Dorsolateral prefrontal cortex (tissue), 120 donors: ENCODE measurements at regions of chr13 and their contacts with region 1.

Region 1: DNA sequence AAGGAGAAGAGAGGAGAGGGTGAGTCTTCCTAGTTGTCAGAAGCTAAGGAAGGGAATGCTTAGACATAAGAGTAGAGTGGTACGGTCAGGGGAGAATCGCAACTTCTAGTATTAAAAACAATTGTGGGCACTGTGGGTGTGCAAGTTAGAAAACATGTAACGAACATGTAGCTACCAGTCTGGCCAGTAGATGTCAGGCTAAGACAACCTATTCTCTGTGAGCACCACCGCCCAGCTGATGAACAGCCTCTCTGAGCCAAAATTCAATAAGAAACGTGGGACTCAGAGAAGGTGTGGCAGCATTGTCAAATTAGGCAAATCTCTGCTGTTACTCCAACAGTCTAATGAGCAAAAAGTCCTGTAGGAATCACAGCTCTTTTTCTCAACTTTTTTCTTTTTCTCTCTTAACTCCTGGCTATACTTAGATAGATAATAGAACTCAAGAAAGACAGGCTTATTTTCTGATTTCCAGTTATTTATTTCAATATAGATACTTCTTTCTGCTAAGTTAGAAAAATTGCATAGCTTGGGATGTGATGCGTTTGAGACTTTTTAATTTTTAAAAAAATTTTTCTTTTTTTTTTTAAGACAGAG is 186.2 kb downstream of the USP12 start:
- DNase-seq: peak in 6 of 10 donors; percentile 52 to 85 (median 72)
- H3K4me3 ChIP-seq: peak overlapping the region in 1 of 59 donors; percentile 12
- H3K27ac ChIP-seq: peak overlapping the region in 2 of 59 donors; percentile 0 to 52
- H3K27me3 ChIP-seq: no peaks in the 10 kb centered on the region
- CTCF ChIP-seq: peak in 55 of 56 donors; percentile 50 to 99 (median 90)

Region 2: GRCh38 chr13:26946684-26947343 is 38.6 kb before region 1 on chr13:
- intact Hi-C with region 1: loop called in 1 of 2 experiments (anchors 5 kb)
- DNase-seq: no peak
- H3K4me3 ChIP-seq: no peak overlapping the region
- H3K27ac ChIP-seq: no peak overlapping the region
- H3K27me3 ChIP-seq: no peaks in the 10 kb centered on the region
- CTCF ChIP-seq: peak in 55 of 56 donors; percentile 36 to 81 (median 63)

Region 3: DNA sequence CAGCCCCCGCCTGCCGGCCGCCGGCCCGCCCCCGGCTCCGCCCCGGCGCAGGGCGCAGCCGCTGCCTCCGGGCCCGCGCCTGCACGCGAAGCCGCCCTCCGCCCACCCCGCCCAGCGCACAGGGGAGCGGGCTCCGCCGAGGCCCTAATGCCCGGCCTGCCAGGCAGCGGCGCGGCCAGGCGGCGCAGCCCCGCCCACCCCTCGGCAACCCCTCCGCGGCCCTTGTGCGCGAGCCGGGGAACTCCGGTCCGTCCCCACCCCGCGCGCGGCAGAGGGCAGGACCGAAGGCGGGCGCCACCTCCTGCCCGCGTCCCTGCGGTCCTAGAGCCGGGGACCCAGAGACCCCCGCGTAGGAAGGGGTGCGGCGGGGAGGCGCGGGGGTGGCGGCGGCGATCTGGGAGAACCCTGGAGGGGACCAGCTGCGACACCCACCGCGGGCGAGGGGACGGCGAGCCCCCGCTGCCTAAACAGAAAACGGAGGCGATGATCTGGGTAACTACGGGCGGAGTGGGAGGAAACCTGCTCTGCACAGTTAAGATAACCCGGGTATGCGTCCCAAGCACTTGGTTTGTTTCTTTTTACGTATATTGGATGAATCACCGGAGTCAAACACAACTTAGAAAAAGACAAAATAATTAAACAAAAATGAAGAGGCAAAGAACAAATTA is 186.6 kb after region 1 on chr13:
- intact Hi-C with region 1: loop called (anchors 5 kb)
- DNase-seq: peak; percentile 74 to 93 (median 84)
- H3K4me3 ChIP-seq: peak overlapping the region; percentile 62 to 97 (median 84)
- H3K27ac ChIP-seq: peak overlapping the region in 58 of 59 donors; percentile 65 to 98 (median 93)
- H3K27me3 ChIP-seq: no peaks in the 10 kb centered on the region
- CTCF ChIP-seq: peak in 47 of 56 donors; percentile 15 to 69 (median 43)

Region 4: GRCh38 chr13:27283906-27284493 is 298.6 kb after region 1 on chr13:
- intact Hi-C with region 1: loop called (anchors 2 to 10 kb)
- DNase-seq: peak in 4 of 10 donors; percentile 42 to 70 (median 51)
- H3K4me3 ChIP-seq: no peak overlapping the region
- H3K27ac ChIP-seq: peak overlapping the region in 19 of 59 donors; percentile 5 to 77 (median 41)
- H3K27me3 ChIP-seq: no peaks in the 10 kb centered on the region
- CTCF ChIP-seq: peak in 54 of 56 donors; percentile 23 to 76 (median 54)

Region 5: GRCh38 chr13:27980280-27980998 is 995.1 kb after region 1 on chr13:
- intact Hi-C with region 1: loop called (anchors 10 kb)
- DNase-seq: peak in 1 of 10 donors; percentile 33
- H3K4me3 ChIP-seq: peak overlapping the region in 2 of 59 donors; percentile 4 to 23
- H3K27ac ChIP-seq: no peak overlapping the region
- H3K27me3 ChIP-seq: peaks cover 35 to 97% (median 86%) of the 10 kb centered on the region in 45 donors
- CTCF ChIP-seq: no peak